PC-9 (cell line): ENCODE measurements at regions of chr2 and their contacts with region 1.

Region 1: GRCh38 chr2:160109936-160110673 is 47.7 kb upstream of the PLA2R1 start:
- DNase-seq: peak in 1 of 2 experiments; percentile 46
- H3K4me3 ChIP-seq: no peak overlapping the region
- H3K27ac ChIP-seq: no peak overlapping the region
- H3K4me1 ChIP-seq: no peaks in the 10 kb centered on the region
- H3K27me3 ChIP-seq: no peaks in the 10 kb centered on the region
- CTCF ChIP-seq: peak; percentile 77

Region 2: GRCh38 chr2:160269803-160270570 is 159.9 kb after region 1 on chr2:
- CTCF ChIA-PET with region 1: interaction called, 4 read pairs
- POLR2A ChIA-PET with region 1: no interaction called
- intact Hi-C with region 1: loop called (anchors 5 kb)
- DNase-seq: peak; percentile 78
- H3K4me3 ChIP-seq: peak overlapping the region; percentile 52; the same call in 1 of the 2 replicates
- H3K27ac ChIP-seq: peak overlapping the region; percentile 86
- H3K4me1 ChIP-seq: peaks cover 26% of the 10 kb centered on the region
- H3K27me3 ChIP-seq: no peaks in the 10 kb centered on the region
- CTCF ChIP-seq: peak; percentile 59

Region 3: GRCh38 chr2:160994141-160995002 is 884.3 kb after region 1 on chr2:
- CTCF ChIA-PET with region 1: no interaction called
- POLR2A ChIA-PET with region 1: no interaction called
- intact Hi-C with region 1: loop called (anchors 5 kb)
- DNase-seq: peak; percentile 48 to 61
- H3K4me3 ChIP-seq: no peak overlapping the region
- H3K27ac ChIP-seq: no peak overlapping the region
- H3K4me1 ChIP-seq: no peaks in the 10 kb centered on the region; the same call in 1 of the 2 replicates
- H3K27me3 ChIP-seq: no peaks in the 10 kb centered on the region
- CTCF ChIP-seq: peak; percentile 81